ENCODE measurements at regions of chr7 and their contacts with region 1.

Region 1: GRCh38 chr7:101974393-101974792 is 157.0 kb downstream of the CUX1 start:
- DNase-seq: no peak
- H3K4me3 ChIP-seq: no peak overlapping the region
- H3K27ac ChIP-seq: peak overlapping the region; percentile 40
- H3K4me1 ChIP-seq: peaks cover 54% of the 10 kb centered on the region
- CTCF ChIP-seq: no peak

Region 2: GRCh38 chr7:101960985-101961708 is 13.2 kb before region 1 on chr7:
- CTCF ChIA-PET with region 1: no interaction called
- POLR2A ChIA-PET with region 1: interaction called, 13 read pairs
- intact Hi-C with region 1: no loop called
- DNase-seq: no peak
- H3K4me3 ChIP-seq: no peak overlapping the region
- H3K27ac ChIP-seq: no peak overlapping the region
- H3K4me1 ChIP-seq: peaks cover 31% of the 10 kb centered on the region
- CTCF ChIP-seq: no peak

Region 3: GRCh38 chr7:102291056-102291915 is 316.9 kb after region 1 on chr7:
- CTCF ChIA-PET with region 1: no interaction called
- POLR2A ChIA-PET with region 1: no interaction called
- intact Hi-C with region 1: no loop called
- DNase-seq: peak; percentile 77
- H3K4me3 ChIP-seq: peak overlapping the region; percentile 95
- H3K27ac ChIP-seq: peak overlapping the region; percentile 97
- H3K4me1 ChIP-seq: peaks cover 79% of the 10 kb centered on the region
- CTCF ChIP-seq: no peak